Right cardiac atrium (tissue), 5 donors: ENCODE measurements at regions of chr7 and their contacts with region 1.

Region 1: GRCh38 chr7:88789480-88790064 is 6.0 kb downstream of the TEX47 start:
- DNase-seq: no peak
- ATAC-seq: no peak
- H3K4me3 ChIP-seq: no peak overlapping the region
- H3K27ac ChIP-seq: no peak overlapping the region
- H3K4me1 ChIP-seq: no peaks in the 10 kb centered on the region
- H3K27me3 ChIP-seq: no peaks in the 10 kb centered on the region

Region 2: DNA sequence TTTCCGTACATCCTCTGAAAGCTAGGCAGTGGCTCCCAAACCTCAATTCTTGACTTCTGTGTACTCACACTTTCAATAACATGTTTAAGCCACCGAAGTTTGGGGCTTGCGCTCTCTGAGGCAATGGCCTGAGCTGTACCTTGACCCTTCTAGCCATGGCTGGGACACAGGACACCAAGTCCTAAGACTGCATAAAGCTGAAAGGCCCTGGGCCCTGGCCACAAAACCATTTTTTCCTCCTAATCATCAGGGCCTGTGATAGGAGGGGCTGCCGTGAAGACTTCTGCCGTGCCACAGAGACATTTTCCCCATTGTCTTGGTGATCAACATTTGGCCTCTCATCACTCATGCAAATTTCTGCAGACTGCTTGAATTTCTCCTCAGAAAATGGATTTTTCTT is 222.4 kb after region 1 on chr7:
- intact Hi-C with region 1: no loop called
- DNase-seq: no peak
- ATAC-seq: no peak
- H3K4me3 ChIP-seq: no peak overlapping the region
- H3K27ac ChIP-seq: no peak overlapping the region
- H3K4me1 ChIP-seq: no peaks in the 10 kb centered on the region
- H3K27me3 ChIP-seq: no peaks in the 10 kb centered on the region

Region 3: GRCh38 chr7:89477991-89478390 is 688.4 kb after region 1 on chr7:
- intact Hi-C with region 1: no loop called
- DNase-seq: no peak
- ATAC-seq: no peak
- H3K4me3 ChIP-seq: no peak overlapping the region
- H3K27ac ChIP-seq: no peak overlapping the region
- H3K4me1 ChIP-seq: no peaks in the 10 kb centered on the region
- H3K27me3 ChIP-seq: no peaks in the 10 kb centered on the region

Region 4: DNA sequence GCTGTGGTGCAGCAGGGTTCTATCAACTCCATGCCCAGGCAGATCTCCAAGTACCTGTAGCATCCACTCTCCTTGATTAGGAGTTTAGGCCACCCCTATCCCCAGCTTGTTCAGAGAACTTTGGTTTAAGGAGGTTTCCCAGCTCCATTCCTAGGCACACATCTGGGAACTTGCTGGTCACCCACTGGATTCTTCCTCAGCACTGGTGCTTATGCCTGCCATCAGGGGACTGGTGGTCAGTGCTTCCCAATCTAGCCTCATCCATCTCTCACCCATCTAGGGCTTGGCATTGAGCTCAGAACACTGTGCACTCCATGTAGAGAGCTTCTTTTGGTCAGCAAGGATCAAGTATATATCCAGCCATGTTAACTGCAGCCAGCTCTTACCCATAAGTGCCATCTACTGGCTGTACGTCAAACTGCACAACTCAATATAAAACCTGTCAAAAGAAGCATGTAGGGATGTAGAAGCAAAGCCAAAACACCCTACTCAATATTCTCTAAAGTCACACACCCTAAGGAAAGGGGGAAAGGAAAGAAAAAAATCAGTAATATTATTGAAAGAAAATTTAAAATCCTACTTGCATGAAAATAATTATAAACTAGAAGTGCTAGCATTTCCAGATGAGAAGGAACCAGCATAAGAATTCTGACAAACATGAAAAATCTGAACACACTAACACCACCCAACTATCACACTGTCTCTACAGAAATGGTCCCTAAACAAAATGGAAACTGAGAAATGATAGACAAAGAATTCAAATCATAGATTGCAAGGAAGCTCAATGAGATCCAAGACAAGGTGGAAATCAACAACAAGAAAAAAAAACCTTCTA is 833.5 kb after region 1 on chr7:
- intact Hi-C with region 1: loop called in 1 of 4 experiments (anchors 10 kb)
- DNase-seq: no peak
- ATAC-seq: peak; percentile 52 to 65
- H3K4me3 ChIP-seq: no peak overlapping the region
- H3K27ac ChIP-seq: no peak overlapping the region
- H3K4me1 ChIP-seq: no peaks in the 10 kb centered on the region
- H3K27me3 ChIP-seq: no peaks in the 10 kb centered on the region